B cell (primary cell): ENCODE measurements at regions of chr1 and their contacts with region 1.

Region 1: DNA sequence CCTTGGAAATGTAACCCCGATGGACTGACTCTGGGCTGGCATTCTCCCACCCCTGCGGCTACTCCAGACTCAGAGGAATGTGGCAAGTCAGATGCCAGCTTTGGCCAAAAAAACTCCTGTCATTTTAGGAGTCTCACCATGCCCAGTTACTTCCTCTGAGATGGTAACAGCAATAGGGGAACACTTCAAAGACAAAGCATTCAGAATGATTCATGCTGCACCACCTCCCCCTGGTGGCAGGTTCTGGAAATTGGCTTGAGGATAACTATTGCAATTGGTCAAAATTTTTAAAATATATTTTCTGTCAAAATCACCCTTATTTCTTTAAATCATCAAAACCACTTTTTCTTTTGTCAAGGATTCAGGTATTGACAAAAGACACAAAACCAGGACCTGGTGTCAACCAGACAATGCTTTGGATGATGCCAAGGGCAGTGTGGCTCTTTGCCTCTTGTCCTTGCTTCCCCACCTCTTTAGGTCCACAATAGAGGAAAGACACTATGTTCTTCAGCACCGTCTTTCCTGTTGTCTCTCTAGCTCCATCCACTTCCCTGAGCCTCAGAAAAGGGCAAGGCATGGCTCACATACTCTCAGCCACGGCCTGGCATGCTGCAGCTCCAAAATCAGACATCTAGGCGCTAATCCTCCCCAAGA is 9.9 kb upstream of the CDCA8 start:
- DNase-seq: peak; percentile 81
- ATAC-seq: peak; percentile 84
- H3K4me3 ChIP-seq: no peak overlapping the region
- H3K4me3 Mint-ChIP-seq: no peak overlapping the region
- H3K27ac ChIP-seq: peak overlapping the region; percentile 15 to 66
- H3K27ac Mint-ChIP-seq: peak overlapping the region; percentile 84
- H3K4me1 ChIP-seq: peaks cover 3 to 11% of the 10 kb centered on the region in 2 donors
- H3K4me1 Mint-ChIP-seq: peaks cover 7% of the 10 kb centered on the region
- H3K27me3 ChIP-seq: no peaks in the 10 kb centered on the region
- H3K27me3 Mint-ChIP-seq: no peaks in the 10 kb centered on the region
- CTCF ChIP-seq: peak; percentile 94

Region 2: DNA sequence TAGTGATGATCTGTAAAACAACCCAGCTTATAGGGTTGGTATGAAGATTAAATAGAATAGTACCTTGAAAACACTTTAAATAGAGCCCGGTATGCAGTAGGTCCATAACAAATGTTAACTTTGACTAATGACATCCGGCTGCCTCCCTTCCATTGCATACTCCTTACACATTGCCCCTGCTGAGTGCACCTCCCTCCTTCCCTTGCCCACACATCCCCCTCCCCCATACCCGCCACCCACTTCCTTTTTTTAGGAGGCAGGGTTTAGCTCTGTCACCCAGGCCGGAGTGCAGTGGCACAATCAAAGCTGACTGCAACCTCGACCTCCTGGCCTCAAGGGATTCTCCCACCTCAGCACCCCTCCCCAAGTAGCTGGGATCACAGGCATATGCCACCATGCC is 232.5 kb before region 1 on chr1:
- CTCF ChIA-PET with region 1: interaction called, 41 read pairs
- POLR2A ChIA-PET with region 1: no interaction called
- intact Hi-C with region 1: loop called (anchors 1 kb)
- DNase-seq: peak; percentile 52
- ATAC-seq: peak; percentile 55
- H3K4me3 ChIP-seq: no peak overlapping the region
- H3K4me3 Mint-ChIP-seq: no peak overlapping the region
- H3K27ac ChIP-seq: no peak overlapping the region
- H3K27ac Mint-ChIP-seq: no peak overlapping the region
- H3K4me1 ChIP-seq: peaks cover 8 to 13% of the 10 kb centered on the region in 2 donors
- H3K4me1 Mint-ChIP-seq: peaks cover 10% of the 10 kb centered on the region
- H3K27me3 ChIP-seq: peaks cover 0 to 4% (median 0%) of the 10 kb centered on the region in 4 experiments
- H3K27me3 Mint-ChIP-seq: peaks cover 15% of the 10 kb centered on the region
- CTCF ChIP-seq: no peak

Region 3: DNA sequence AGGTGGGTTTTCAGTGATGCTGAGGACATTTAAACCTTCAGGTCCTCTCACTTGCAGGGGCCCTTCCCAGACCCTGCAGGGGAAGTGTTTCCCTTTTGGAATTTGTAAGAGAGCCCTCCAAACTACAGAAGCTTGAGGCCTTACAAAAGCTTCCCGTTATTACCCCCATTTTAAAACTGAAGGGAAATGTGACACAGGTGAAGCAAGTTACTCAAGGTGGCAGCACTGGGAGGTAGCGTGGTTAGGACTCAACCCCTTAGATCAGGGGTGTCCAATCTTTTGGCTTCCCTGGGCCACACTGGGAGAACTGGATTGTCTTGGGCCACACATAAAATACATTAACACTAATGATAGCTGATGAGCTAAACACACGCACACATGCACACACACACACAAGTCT is 223.9 kb before region 1 on chr1:
- CTCF ChIA-PET with region 1: interaction called, 41 read pairs
- POLR2A ChIA-PET with region 1: no interaction called
- intact Hi-C with region 1: loop called (anchors 1 kb)
- DNase-seq: no peak
- ATAC-seq: no peak
- H3K4me3 ChIP-seq: no peak overlapping the region
- H3K4me3 Mint-ChIP-seq: no peak overlapping the region
- H3K27ac ChIP-seq: no peak overlapping the region
- H3K27ac Mint-ChIP-seq: no peak overlapping the region
- H3K4me1 ChIP-seq: peaks cover 0 to 6% of the 10 kb centered on the region in 2 donors
- H3K4me1 Mint-ChIP-seq: peaks cover 4% of the 10 kb centered on the region
- H3K27me3 ChIP-seq: peaks cover 0 to 2% (median 0%) of the 10 kb centered on the region in 4 experiments
- H3K27me3 Mint-ChIP-seq: no peaks in the 10 kb centered on the region
- CTCF ChIP-seq: no peak

Region 4: DNA sequence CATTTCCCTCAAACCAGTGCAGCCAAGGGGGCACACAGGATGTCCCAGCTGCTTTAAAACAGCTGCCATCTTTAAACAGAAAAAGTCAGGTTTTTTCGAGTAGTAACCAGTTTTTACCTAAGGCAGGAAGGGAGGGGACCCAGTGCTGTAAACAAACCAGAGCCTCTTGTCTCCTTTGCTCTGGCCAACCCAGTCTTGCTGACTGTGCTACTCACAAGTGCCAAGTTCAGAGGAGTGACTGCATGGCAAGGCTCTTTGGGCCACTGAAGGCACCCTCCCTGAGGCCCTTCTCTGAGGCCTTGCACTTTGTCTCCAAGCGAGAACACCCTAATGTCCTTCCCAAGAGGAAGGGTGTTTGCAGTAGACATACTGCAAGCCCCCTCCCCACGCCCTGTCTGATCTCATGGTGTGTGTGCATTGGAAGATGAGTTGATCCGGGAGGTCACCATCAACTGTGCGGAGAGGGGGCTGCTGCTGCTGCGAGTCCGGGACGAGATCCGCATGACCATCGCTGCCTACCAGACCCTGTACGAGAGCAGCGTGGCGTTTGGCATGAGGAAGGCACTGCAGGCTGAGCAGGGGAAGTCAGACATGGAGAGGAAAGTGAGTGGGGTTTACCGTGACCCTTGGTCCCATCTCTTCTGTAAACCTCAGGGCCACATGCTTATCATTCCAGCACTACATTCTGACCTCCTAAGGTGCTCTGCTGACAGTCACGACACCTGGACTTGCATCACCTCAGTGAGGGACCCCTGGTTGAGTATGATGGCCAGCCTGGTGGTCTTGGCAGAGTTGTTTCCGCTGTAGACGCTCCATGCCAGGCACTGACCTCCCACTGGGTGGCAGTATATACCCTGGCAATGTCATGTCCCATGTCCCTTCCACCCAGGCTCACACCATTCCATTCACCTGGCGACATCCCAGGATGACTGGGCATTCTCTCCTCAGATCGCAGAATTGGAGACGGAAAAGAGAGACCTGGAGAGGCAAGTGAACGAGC is 121.0 kb before region 1 on chr1:
- CTCF ChIA-PET with region 1: interaction called, 13 read pairs
- POLR2A ChIA-PET with region 1: no interaction called
- intact Hi-C with region 1: loop called (anchors 1 kb)
- DNase-seq: peak; percentile 51
- ATAC-seq: no peak
- H3K4me3 ChIP-seq: no peak overlapping the region
- H3K4me3 Mint-ChIP-seq: no peak overlapping the region
- H3K27ac ChIP-seq: no peak overlapping the region
- H3K27ac Mint-ChIP-seq: no peak overlapping the region
- H3K4me1 ChIP-seq: no peaks in the 10 kb centered on the region
- H3K4me1 Mint-ChIP-seq: no peaks in the 10 kb centered on the region
- H3K27me3 ChIP-seq: no peaks in the 10 kb centered on the region
- H3K27me3 Mint-ChIP-seq: peaks cover 5% of the 10 kb centered on the region
- CTCF ChIP-seq: peak; percentile 60

Region 5: DNA sequence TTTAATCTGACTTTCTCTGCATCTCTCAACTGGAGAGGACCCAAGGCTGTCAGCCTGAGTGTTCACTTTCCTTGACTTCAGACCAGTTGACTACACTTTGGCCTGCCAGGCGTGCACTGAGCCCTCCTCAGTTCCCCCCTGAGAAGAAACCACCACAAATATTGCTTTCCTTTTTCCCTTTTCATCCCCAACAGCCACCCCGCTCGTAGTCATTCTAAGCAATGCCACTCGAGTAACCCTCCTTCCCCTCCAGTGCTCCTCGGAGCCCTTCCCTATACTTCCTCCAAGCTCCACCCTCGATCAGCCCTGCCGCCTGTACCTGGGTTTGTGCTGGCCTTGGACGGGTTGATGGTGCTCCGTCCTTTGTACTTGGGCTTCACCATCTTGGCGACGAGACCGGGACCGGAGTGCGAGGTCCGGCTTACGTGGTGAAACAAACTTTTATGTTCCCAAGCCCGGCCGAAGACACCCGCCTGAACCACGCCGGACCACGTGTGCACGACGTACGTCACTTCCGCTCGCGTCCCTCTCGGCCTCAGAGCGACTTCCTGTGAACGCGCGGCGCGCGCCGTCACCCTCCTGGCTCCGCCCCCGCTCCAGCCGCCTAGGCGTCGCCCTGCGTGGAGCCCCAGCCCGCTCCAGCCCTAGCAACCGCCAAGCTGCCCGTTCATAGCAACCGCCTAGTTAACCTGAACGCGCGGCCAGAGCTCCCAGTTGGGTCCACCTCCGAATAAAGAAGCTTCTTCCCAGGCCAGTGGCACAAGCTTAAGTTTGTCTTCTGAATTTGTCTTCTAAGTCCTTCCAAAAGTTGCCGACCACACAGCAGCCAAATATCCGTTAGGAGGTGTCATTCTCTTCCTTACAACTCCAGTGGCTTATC is 86.8 kb before region 1 on chr1 and contains the start of gene GNL2:
- CTCF ChIA-PET with region 1: interaction called, 328 read pairs
- POLR2A ChIA-PET with region 1: no interaction called
- intact Hi-C with region 1: no loop called
- DNase-seq: peak; percentile 99
- ATAC-seq: peak; percentile 98
- H3K4me3 ChIP-seq: peak within 1 kb of the TSS; percentile 67 to 96 (median 92)
- H3K4me3 Mint-ChIP-seq: peak within 1 kb of the TSS; percentile 99
- H3K27ac ChIP-seq: peak within 1 kb of the TSS; percentile 77 to 90
- H3K27ac Mint-ChIP-seq: peak within 1 kb of the TSS; percentile 93
- H3K4me1 ChIP-seq: peaks cover 16 to 20% of the 10 kb centered on the region in 2 donors
- H3K4me1 Mint-ChIP-seq: peaks cover 26% of the 10 kb centered on the region
- H3K27me3 ChIP-seq: peaks cover 0 to 3% (median 0%) of the 10 kb centered on the region in 4 experiments
- H3K27me3 Mint-ChIP-seq: no peaks in the 10 kb centered on the region
- CTCF ChIP-seq: no peak
- total RNA-seq, gene GNL2: 44.0 and 50.6 TPM in 2 replicates

Region 6: GRCh38 chr1:37602750-37603694 is 79.4 kb before region 1 on chr1:
- CTCF ChIA-PET with region 1: interaction called, 328 read pairs
- POLR2A ChIA-PET with region 1: interaction called, 3 read pairs
- intact Hi-C with region 1: loop called (anchors 1 kb)
- DNase-seq: peak; percentile 66
- ATAC-seq: peak; percentile 64
- H3K4me3 ChIP-seq: no peak overlapping the region
- H3K4me3 Mint-ChIP-seq: no peak overlapping the region
- H3K27ac ChIP-seq: no peak overlapping the region
- H3K27ac Mint-ChIP-seq: no peak overlapping the region
- H3K4me1 ChIP-seq: peaks cover 4% of the 10 kb centered on the region in 2 donors
- H3K4me1 Mint-ChIP-seq: no peaks in the 10 kb centered on the region
- H3K27me3 ChIP-seq: peaks cover 0 to 3% (median 1%) of the 10 kb centered on the region in 4 experiments
- H3K27me3 Mint-ChIP-seq: peaks cover 12% of the 10 kb centered on the region
- CTCF ChIP-seq: peak; percentile 83

Region 7: DNA sequence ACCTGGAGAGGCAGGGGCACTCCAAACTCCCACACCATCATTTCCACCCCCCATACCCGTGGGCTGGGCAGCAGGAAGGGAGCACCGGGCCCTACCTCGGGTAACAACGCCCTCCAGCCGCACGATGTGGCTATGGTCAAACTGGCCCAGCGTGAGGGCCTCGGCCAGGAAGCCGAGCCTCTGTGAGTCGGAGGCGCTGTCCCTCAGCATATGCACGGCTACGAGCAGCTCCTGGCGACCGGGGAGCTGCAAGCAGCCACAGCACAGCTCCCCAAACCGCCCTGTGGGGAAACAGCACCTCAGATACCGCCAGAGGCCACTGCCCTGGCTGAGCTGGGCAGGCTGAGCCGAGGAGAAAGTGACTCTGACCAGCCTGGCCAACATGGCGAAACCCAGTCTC is 39.1 kb after region 1 on chr1:
- CTCF ChIA-PET with region 1: no interaction called
- POLR2A ChIA-PET with region 1: no interaction called
- intact Hi-C with region 1: no loop called
- DNase-seq: no peak
- ATAC-seq: no peak
- H3K4me3 ChIP-seq: no peak overlapping the region
- H3K4me3 Mint-ChIP-seq: no peak overlapping the region
- H3K27ac ChIP-seq: no peak overlapping the region
- H3K27ac Mint-ChIP-seq: no peak overlapping the region
- H3K4me1 ChIP-seq: no peaks in the 10 kb centered on the region
- H3K4me1 Mint-ChIP-seq: no peaks in the 10 kb centered on the region
- H3K27me3 ChIP-seq: peaks cover 0 to 2% (median 0%) of the 10 kb centered on the region in 4 experiments
- H3K27me3 Mint-ChIP-seq: peaks cover 19% of the 10 kb centered on the region
- CTCF ChIP-seq: no peak

Region 8: GRCh38 chr1:37797750-37798345 is 115.4 kb after region 1 on chr1:
- CTCF ChIA-PET with region 1: no interaction called
- POLR2A ChIA-PET with region 1: no interaction called
- intact Hi-C with region 1: no loop called
- DNase-seq: no peak
- ATAC-seq: no peak
- H3K4me3 ChIP-seq: no peak overlapping the region
- H3K4me3 Mint-ChIP-seq: no peak overlapping the region
- H3K27ac ChIP-seq: no peak overlapping the region
- H3K27ac Mint-ChIP-seq: no peak overlapping the region
- H3K4me1 ChIP-seq: peaks cover 15 to 18% of the 10 kb centered on the region in 2 donors
- H3K4me1 Mint-ChIP-seq: peaks cover 16% of the 10 kb centered on the region
- H3K27me3 ChIP-seq: peaks cover 0 to 9% (median 0%) of the 10 kb centered on the region in 4 experiments
- H3K27me3 Mint-ChIP-seq: no peaks in the 10 kb centered on the region
- CTCF ChIP-seq: no peak